CD4-positive, alpha-beta memory T cell (primary cell): ENCODE measurements at regions of chr6 and their contacts with region 1.

Region 1: GRCh38 chr6:8063761-8064637 is at the start of gene BLOC1S5:
- DNase-seq: peak; percentile 96 to 97 (median 96)
- H3K4me3 ChIP-seq: peak within 1 kb of the TSS; percentile 0 to 97
- H3K4me3 Mint-ChIP-seq: peak within 1 kb of the TSS; percentile 92 to 98 (median 94)
- H3K27ac ChIP-seq: peak within 1 kb of the TSS; percentile 92
- H3K27ac Mint-ChIP-seq: peak within 1 kb of the TSS; percentile 96 to 98 (median 97)
- H3K4me1 ChIP-seq: peaks cover 21% of the 10 kb centered on the region
- H3K4me1 Mint-ChIP-seq: peaks cover 19 to 36% (median 20%) of the 10 kb centered on the region in 4 donors
- H3K27me3 ChIP-seq: no peaks in the 10 kb centered on the region
- H3K27me3 Mint-ChIP-seq: no peaks in the 10 kb centered on the region
- total RNA-seq, gene BLOC1S5: 23.0 to 24.9 TPM

Region 2: DNA sequence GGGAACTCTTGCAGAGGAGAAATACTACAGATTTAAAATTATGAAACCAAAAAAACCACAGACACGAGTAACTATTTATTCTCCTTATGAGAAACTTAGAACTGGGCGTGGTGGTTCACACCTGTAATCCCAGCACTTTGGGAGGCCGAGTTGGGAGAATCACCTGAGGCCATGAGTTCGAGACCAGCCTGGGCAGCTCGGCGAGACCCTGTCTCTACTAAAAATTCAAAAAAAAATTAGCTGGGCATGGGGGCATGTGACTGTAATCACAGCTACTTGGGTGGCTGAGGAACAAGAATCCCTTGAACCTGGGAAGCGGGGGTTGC is 787.8 kb before region 1 on chr6:
- CTCF ChIA-PET with region 1: interaction called, 10 read pairs
- POLR2A ChIA-PET with region 1: no interaction called
- intact Hi-C with region 1: loop called (anchors 1 kb)
- DNase-seq: no peak
- H3K4me3 ChIP-seq: no peak overlapping the region
- H3K4me3 Mint-ChIP-seq: no peak overlapping the region
- H3K27ac ChIP-seq: no peak overlapping the region
- H3K27ac Mint-ChIP-seq: peak overlapping the region in 1 of 7 donors; percentile 5
- H3K4me1 ChIP-seq: no peaks in the 10 kb centered on the region
- H3K4me1 Mint-ChIP-seq: peaks cover 0 to 10% (median 8%) of the 10 kb centered on the region in 4 donors
- H3K27me3 ChIP-seq: no peaks in the 10 kb centered on the region
- H3K27me3 Mint-ChIP-seq: no peaks in the 10 kb centered on the region

Region 3: GRCh38 chr6:7389451-7390225 is 674.4 kb before region 1 on chr6 and contains the starts of genes CAGE1 and RIOK1:
- CTCF ChIA-PET with region 1: no interaction called
- POLR2A ChIA-PET with region 1: interaction called, 3 read pairs
- intact Hi-C with region 1: loop called (anchors 1 kb)
- DNase-seq: peak; percentile 94 to 96 (median 96)
- H3K4me3 ChIP-seq: peak within 1 kb of the TSS; percentile 91 to 99
- H3K4me3 Mint-ChIP-seq: peak within 1 kb of the TSS; percentile 92 to 97 (median 94)
- H3K27ac ChIP-seq: peak within 1 kb of the TSS; percentile 94
- H3K27ac Mint-ChIP-seq: peak within 1 kb of the TSS; percentile 97 to 100 (median 100)
- H3K4me1 ChIP-seq: peaks cover 30% of the 10 kb centered on the region
- H3K4me1 Mint-ChIP-seq: peaks cover 32 to 51% (median 42%) of the 10 kb centered on the region in 4 donors
- H3K27me3 ChIP-seq: no peaks in the 10 kb centered on the region
- H3K27me3 Mint-ChIP-seq: no peaks in the 10 kb centered on the region
- total RNA-seq, gene CAGE1: 0.17 to 0.33 TPM
- total RNA-seq, gene RIOK1: 22.4 to 26.1 TPM

Region 4: DNA sequence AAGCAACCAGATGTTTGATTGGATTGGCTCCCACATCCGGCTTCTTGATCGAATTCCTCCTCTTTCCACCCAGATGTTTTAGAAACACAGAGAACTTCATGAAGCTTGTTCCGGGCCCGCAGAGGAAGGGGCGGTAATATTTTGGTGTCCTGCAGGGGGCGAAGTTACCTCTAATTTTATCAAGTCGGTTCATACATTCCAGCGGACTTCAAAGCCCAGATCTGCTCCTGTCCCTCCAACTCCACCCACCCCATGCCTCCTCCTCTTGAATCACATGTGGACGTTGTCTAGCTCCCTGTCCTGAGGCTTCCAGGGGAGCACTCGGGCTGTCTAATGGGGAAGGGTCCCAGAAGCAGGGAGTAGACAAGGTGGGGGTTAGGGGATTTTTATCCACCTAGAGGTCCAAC is 341.0 kb before region 1 on chr6:
- CTCF ChIA-PET with region 1: interaction called, 22 read pairs
- POLR2A ChIA-PET with region 1: no interaction called
- intact Hi-C with region 1: no loop called
- DNase-seq: peak; percentile 27 to 52 (median 37)
- H3K4me3 ChIP-seq: no peak overlapping the region
- H3K4me3 Mint-ChIP-seq: no peak overlapping the region
- H3K27ac ChIP-seq: no peak overlapping the region
- H3K27ac Mint-ChIP-seq: no peak overlapping the region
- H3K4me1 ChIP-seq: peaks cover 12% of the 10 kb centered on the region
- H3K4me1 Mint-ChIP-seq: peaks cover 1 to 13% (median 11%) of the 10 kb centered on the region in 4 donors
- H3K27me3 ChIP-seq: peaks cover 20% of the 10 kb centered on the region
- H3K27me3 Mint-ChIP-seq: peaks cover 34 to 51% of the 10 kb centered on the region in 2 donors

Region 5: GRCh38 chr6:8017276-8017701 is 46.7 kb before region 1 on chr6:
- CTCF ChIA-PET with region 1: no interaction called
- POLR2A ChIA-PET with region 1: interaction called, 12 read pairs
- intact Hi-C with region 1: no loop called
- DNase-seq: peak in 1 of 5 donors; percentile 53
- H3K4me3 ChIP-seq: no peak overlapping the region
- H3K4me3 Mint-ChIP-seq: peak overlapping the region in 5 of 8 donors; percentile 1 to 94 (median 29)
- H3K27ac ChIP-seq: peak overlapping the region; percentile 34
- H3K27ac Mint-ChIP-seq: peak overlapping the region in 4 of 7 donors; percentile 7 to 98 (median 62)
- H3K4me1 ChIP-seq: no peaks in the 10 kb centered on the region
- H3K4me1 Mint-ChIP-seq: peaks cover 0 to 16% (median 0%) of the 10 kb centered on the region in 4 donors
- H3K27me3 ChIP-seq: no peaks in the 10 kb centered on the region
- H3K27me3 Mint-ChIP-seq: no peaks in the 10 kb centered on the region

Region 6: DNA sequence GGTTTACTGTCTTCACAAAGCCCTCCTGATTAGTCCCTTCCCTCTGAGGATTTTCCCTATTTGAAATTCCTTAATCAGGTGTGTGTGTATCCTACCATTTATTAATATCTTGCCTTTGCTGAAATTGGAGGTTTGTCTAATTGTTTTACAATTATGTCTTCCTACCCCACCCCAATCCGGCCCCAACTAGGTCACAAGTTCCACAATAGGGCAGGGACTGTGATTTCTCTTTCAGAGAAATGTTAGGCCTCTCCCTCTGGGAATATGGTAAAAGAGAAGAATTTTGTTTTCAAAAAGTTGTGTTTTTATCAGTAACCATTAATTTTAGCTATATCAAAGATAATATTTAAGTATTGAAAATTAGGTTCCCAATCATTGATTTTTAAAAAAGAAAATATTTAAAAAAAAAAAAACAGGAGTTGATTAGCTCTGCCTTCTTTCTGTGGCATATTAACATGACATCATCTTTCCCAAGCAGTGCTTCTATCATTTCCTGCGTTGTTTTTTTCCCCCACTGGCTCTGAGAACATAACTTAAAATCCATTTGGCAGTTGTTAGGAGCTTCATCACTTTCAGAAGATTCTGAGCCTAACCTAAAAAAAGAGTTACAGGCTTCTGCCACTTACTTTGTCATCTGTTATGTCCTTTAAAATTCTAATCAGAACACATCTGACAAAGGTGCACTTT is 35.9 kb before region 1 on chr6:
- CTCF ChIA-PET with region 1: no interaction called
- POLR2A ChIA-PET with region 1: no interaction called
- intact Hi-C with region 1: no loop called
- DNase-seq: no peak
- H3K4me3 ChIP-seq: no peak overlapping the region
- H3K4me3 Mint-ChIP-seq: no peak overlapping the region
- H3K27ac ChIP-seq: no peak overlapping the region
- H3K27ac Mint-ChIP-seq: peak overlapping the region in 1 of 7 donors; percentile 7
- H3K4me1 ChIP-seq: no peaks in the 10 kb centered on the region
- H3K4me1 Mint-ChIP-seq: peaks cover 22 to 35% (median 31%) of the 10 kb centered on the region in 4 donors
- H3K27me3 ChIP-seq: no peaks in the 10 kb centered on the region
- H3K27me3 Mint-ChIP-seq: no peaks in the 10 kb centered on the region

Region 7: DNA sequence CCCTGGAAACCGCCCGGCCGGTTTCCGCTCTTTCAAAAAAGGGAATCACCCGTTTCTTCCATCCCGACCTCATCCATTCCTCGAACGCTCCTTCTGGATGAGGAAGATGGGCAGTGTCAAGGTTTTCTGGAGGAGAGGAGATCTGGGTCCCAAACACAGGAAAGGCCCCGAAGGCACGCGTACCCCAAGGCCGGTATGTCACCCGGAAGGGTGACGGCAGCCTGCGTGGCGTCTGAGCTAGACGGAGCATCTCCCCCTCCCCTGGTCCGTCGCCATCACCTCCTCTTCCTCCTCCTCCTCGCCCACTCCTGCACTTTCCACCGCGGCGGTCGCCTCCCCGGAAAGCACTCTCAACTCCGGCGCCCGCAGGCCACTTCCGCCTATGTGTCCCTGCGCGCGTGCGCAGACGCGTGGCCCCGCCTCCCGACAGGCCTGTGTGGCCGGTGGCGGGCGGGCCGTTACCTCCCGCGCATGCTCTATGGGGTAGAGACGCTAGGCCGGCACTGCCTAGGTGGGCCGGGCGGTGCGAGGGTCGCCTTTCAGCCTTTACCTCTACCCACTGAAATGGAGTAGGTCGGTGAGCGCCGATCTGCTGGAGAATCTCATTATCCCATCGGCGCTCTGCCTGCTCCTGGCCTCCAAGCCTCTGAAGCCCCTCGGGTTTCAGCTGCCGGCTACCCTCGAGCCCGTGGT is 371.3 kb after region 1 on chr6 and contains the start of gene SLC35B3:
- CTCF ChIA-PET with region 1: interaction called, 4 read pairs
- POLR2A ChIA-PET with region 1: interaction called, 3 read pairs
- intact Hi-C with region 1: loop called (anchors 2 kb)
- DNase-seq: peak; percentile 95 to 98 (median 97)
- H3K4me3 ChIP-seq: peak within 1 kb of the TSS; percentile 95 to 99
- H3K4me3 Mint-ChIP-seq: peak within 1 kb of the TSS; percentile 92 to 96 (median 94)
- H3K27ac ChIP-seq: peak within 1 kb of the TSS; percentile 94
- H3K27ac Mint-ChIP-seq: peak within 1 kb of the TSS; percentile 96 to 98 (median 98)
- H3K4me1 ChIP-seq: peaks cover 27% of the 10 kb centered on the region
- H3K4me1 Mint-ChIP-seq: peaks cover 28 to 51% (median 37%) of the 10 kb centered on the region in 4 donors
- H3K27me3 ChIP-seq: no peaks in the 10 kb centered on the region
- H3K27me3 Mint-ChIP-seq: no peaks in the 10 kb centered on the region
- total RNA-seq, gene SLC35B3: 17.2 to 18.5 TPM